HepG2 (cell line): ENCODE measurements at regions of chr5 and their contacts with region 1.

Region 1: DNA sequence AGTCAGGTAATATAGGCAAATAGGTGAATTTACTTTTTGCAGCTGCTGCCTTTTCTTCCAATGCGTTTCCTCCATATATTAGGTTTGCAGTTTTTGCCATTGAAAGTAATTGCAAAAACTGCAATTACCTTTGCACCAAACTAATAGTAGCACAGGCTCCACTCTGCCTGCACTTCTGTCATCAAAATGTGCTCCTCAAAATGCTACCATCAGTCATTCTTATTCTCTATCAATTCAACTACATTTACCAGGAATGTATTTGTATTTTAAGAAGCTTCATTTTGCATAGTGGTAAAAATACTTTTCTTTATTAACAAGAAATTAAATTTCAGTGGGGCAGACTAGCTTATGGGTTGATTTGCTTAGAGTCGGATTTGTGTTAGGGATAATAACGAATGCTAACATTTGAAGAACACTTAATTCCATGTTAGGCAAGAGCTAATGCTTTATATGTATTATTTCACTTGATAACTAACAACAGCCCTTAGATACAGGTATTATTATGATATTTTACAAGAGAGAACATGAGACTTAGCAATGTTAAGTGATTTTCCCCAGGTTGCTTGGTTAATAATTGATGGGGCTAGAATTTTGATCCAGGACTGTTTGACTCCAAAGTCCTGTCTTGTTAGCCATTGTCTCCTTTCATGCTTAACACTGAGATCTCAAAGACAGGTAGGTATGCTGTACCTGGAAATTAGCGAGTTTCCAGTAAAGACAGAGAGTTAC is 300.4 kb downstream of the MAN2A1 start:
- DNase-seq: peak; percentile 91
- ATAC-seq: peak; percentile 93
- H3K4me3 ChIP-seq: peak overlapping the region in 2 of 3 experiments; percentile 24 to 30; a peak in 2 of 6 replicates
- H3K27ac ChIP-seq: peak overlapping the region; percentile 84
- H3K4me1 ChIP-seq: peaks cover 78% of the 10 kb centered on the region
- H3K27me3 ChIP-seq: no peaks in the 10 kb centered on the region
- CTCF ChIP-seq: no peak
- EP300 ChIP-seq: peak in 1 of 2 experiments; percentile 89; a peak in 2 of 4 replicates
- POLR2A ChIP-seq: 0 out of 4 replicates have a peak, but pooled peaks of 1 of the 2 experiments have one; percentile 31
- RAD21 ChIP-seq: no peak

Region 2: DNA sequence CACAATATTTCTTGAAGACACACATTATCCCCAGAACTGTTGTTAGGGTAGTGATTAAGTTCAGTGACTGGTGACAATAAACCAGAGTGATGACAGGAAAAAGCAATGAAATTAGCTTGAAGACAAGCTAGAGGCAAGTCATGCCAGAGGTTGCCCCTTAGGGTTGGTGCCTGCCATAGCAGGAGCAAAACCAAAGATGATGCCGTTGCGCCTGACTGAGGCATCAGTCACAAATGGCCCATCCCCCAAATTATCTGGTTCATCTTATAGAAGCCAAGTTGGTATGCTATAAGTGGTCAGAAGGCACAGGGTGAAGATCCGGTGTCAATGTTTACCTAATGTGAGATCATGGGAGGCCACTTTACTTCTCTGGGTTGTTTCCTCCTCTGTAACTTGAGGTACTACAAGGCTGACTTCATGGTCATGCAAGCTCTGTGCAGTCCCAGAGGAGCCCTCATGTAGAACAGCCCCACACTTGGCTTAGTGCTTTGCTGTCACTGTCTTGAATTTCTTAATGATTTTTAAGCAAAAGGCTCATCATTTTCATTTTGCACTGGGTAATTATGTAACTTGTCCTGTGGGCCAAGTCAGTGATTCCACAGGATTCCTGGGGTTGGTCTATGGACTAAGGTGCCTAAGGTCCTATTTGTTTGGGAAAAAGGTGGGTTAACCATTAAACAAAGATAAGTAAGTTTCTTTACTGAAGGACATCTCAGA is 89.1 kb before region 1 on chr5:
- CTCF ChIA-PET with region 1: no interaction called
- POLR2A ChIA-PET with region 1: interaction called, 14 read pairs
- in situ Hi-C with region 1: loop called (anchors 10 kb)
- intact Hi-C with region 1: loop called (anchors 1 kb)
- DNase-seq: peak; percentile 97
- ATAC-seq: peak; percentile 91
- H3K4me3 ChIP-seq: peak overlapping the region; percentile 17 to 62 (median 29); a peak in 3 of 6 replicates
- H3K27ac ChIP-seq: peak overlapping the region; percentile 99
- H3K4me1 ChIP-seq: peaks cover 84% of the 10 kb centered on the region
- H3K27me3 ChIP-seq: no peaks in the 10 kb centered on the region
- CTCF ChIP-seq: peak; percentile 37; the same call in 1 of the 2 replicates
- EP300 ChIP-seq: peak in 1 of 2 experiments; percentile 84
- POLR2A ChIP-seq: peak in 1 of 2 experiments; percentile 49; a peak in 1 of 4 replicates
- RAD21 ChIP-seq: peak; percentile 41

Region 3: GRCh38 chr5:109929911-109930310 is 60.2 kb before region 1 on chr5:
- CTCF ChIA-PET with region 1: no interaction called
- POLR2A ChIA-PET with region 1: no interaction called
- in situ Hi-C with region 1: no loop called
- intact Hi-C with region 1: no loop called
- DNase-seq: no peak
- ATAC-seq: no peak
- H3K4me3 ChIP-seq: no peak overlapping the region
- H3K27ac ChIP-seq: no peak overlapping the region
- H3K4me1 ChIP-seq: peaks cover 19% of the 10 kb centered on the region
- H3K27me3 ChIP-seq: no peaks in the 10 kb centered on the region
- CTCF ChIP-seq: no peak
- EP300 ChIP-seq: no peak
- POLR2A ChIP-seq: no peak
- RAD21 ChIP-seq: no peak

Region 4: DNA sequence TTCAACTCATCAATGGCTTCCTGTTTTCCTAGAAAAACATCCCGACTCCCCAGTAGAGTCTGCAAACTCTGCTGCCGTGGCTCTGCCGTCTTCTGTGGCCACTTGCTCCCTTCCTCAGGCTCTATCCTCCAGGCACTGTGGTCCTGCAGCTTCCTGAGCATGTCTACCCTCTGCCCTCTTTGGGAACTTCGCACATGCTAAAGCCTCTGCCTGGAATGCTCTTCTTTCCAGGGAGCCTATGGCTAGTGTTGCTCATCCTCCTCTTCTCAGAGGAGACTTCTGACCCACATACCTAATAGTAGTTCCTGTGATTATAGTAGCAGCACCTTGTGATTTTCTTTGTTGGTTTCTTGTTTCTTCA is 43.5 kb before region 1 on chr5:
- CTCF ChIA-PET with region 1: no interaction called
- POLR2A ChIA-PET with region 1: no interaction called
- in situ Hi-C with region 1: no loop called
- intact Hi-C with region 1: no loop called
- DNase-seq: no peak
- ATAC-seq: no peak
- H3K4me3 ChIP-seq: no peak overlapping the region
- H3K27ac ChIP-seq: no peak overlapping the region
- H3K4me1 ChIP-seq: peaks cover 30% of the 10 kb centered on the region
- H3K27me3 ChIP-seq: no peaks in the 10 kb centered on the region
- CTCF ChIP-seq: no peak
- EP300 ChIP-seq: no peak
- POLR2A ChIP-seq: no peak
- RAD21 ChIP-seq: no peak